Endothelial cell of umbilical vein (primary cell): ENCODE measurements at regions of chr6 and their contacts with region 1.

Region 1: DNA sequence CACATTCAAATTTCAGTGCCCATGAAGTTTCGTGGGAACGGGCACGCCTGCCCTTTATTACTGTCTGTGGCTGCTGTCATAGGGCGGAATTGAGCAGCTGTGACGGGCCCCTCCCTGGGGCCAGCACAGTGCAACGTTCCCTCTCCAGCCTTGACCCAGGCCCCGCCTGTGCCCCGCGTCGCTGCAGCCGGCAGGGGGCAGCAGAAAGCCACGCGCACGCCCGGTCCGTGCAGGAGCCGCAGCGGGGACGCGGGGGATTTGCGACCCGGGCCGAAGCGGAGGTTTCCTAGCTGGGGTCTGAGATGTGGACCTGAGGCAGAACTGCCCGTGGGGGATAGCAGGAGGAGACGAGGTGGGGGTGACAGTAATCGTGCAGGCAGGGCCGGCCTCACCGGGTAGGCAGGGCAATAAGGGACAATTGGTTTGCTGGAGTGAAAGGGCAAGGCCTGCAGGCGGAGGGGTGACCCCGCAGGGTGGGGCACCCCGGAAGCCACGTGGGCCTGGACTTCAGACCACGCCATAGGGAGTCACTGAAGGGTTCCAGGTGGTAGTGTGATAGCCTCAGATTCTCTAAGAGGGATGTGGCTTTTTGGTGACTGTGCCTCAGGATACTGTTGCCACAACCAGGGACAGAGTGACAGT is 54.4 kb downstream of the SYTL3 start:
- DNase-seq: peak; percentile 63
- H3K4me3 ChIP-seq: peak overlapping the region in 2 of 3 experiments; percentile 11 to 20
- H3K27ac ChIP-seq: no peak overlapping the region
- H3K4me1 ChIP-seq: peaks cover 23% of the 10 kb centered on the region
- H3K27me3 ChIP-seq: no peaks in the 10 kb centered on the region
- CTCF ChIP-seq: peak; percentile 98 to 99
- POLR2A ChIP-seq: no peak

Region 2: GRCh38 chr6:158213925-158214674 is 490.2 kb before region 1 on chr6:
- CTCF ChIA-PET with region 1: interaction called, 14 read pairs
- POLR2A ChIA-PET with region 1: no interaction called
- dilution Hi-C with region 1: no loop called
- intact Hi-C with region 1: no loop called
- DNase-seq: peak; percentile 80
- H3K4me3 ChIP-seq: no peak overlapping the region
- H3K27ac ChIP-seq: no peak overlapping the region
- H3K4me1 ChIP-seq: peaks cover 8% of the 10 kb centered on the region
- H3K27me3 ChIP-seq: no peaks in the 10 kb centered on the region
- CTCF ChIP-seq: peak; percentile 66 to 76
- POLR2A ChIP-seq: no peak

Region 3: DNA sequence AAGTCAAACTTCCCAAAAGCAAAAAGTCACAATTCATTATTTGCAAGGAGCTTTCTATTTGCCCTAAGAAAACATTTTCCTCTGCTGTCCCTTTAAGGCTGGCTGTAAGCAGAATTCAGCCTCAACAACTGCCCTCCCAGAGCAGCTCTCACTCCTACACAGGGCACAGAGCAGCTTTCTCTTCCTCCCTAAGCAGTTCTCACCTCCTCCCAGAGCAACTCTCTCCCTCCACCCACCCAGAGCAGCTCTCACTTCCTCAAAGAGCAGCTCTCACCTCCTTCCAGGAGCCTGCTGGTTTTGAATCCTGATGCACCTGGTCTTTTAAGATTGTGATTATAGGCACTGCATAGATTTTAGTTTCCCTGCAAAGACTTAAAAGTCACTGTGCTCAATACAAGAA is 265.0 kb before region 1 on chr6:
- CTCF ChIA-PET with region 1: no interaction called
- POLR2A ChIA-PET with region 1: no interaction called
- dilution Hi-C with region 1: no loop called
- intact Hi-C with region 1: no loop called
- DNase-seq: no peak
- H3K4me3 ChIP-seq: no peak overlapping the region
- H3K27ac ChIP-seq: no peak overlapping the region
- H3K4me1 ChIP-seq: no peaks in the 10 kb centered on the region
- H3K27me3 ChIP-seq: no peaks in the 10 kb centered on the region
- CTCF ChIP-seq: no peak
- POLR2A ChIP-seq: no peak

Region 4: GRCh38 chr6:158718461-158719046 is 14.3 kb after region 1 on chr6:
- CTCF ChIA-PET with region 1: interaction called, 51 read pairs
- POLR2A ChIA-PET with region 1: no interaction called
- dilution Hi-C with region 1: no loop called
- intact Hi-C with region 1: loop called (anchors 1 kb)
- DNase-seq: peak; percentile 44
- H3K4me3 ChIP-seq: no peak overlapping the region
- H3K27ac ChIP-seq: no peak overlapping the region
- H3K4me1 ChIP-seq: peaks cover 13% of the 10 kb centered on the region
- H3K27me3 ChIP-seq: no peaks in the 10 kb centered on the region
- CTCF ChIP-seq: peak; percentile 66 to 70
- POLR2A ChIP-seq: no peak

Region 5: DNA sequence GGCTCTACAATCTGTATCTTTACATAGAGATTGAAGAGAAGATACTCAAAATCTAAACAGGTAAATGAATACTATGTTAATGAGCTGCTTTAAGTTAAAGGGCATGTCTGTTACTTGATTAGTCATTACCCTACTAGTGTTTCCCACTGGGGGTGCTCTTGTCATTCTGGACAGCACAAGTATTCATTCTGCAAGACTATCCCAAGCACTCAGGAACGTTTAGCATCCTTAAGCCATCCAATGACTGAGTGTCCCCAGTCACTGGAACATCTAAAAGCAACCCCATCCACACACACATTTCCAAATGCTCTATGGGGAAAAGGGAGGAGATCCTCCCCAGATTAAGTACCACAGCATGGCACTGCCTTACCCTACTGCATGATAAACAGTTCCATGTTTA is 89.1 kb after region 1 on chr6:
- CTCF ChIA-PET with region 1: interaction called, 7 read pairs
- POLR2A ChIA-PET with region 1: no interaction called
- dilution Hi-C with region 1: no loop called
- intact Hi-C with region 1: loop called (anchors 10 kb)
- DNase-seq: peak; percentile 37
- H3K4me3 ChIP-seq: no peak overlapping the region
- H3K27ac ChIP-seq: no peak overlapping the region
- H3K4me1 ChIP-seq: no peaks in the 10 kb centered on the region
- H3K27me3 ChIP-seq: no peaks in the 10 kb centered on the region
- CTCF ChIP-seq: peak; percentile 7 to 33
- POLR2A ChIP-seq: no peak

Region 6: DNA sequence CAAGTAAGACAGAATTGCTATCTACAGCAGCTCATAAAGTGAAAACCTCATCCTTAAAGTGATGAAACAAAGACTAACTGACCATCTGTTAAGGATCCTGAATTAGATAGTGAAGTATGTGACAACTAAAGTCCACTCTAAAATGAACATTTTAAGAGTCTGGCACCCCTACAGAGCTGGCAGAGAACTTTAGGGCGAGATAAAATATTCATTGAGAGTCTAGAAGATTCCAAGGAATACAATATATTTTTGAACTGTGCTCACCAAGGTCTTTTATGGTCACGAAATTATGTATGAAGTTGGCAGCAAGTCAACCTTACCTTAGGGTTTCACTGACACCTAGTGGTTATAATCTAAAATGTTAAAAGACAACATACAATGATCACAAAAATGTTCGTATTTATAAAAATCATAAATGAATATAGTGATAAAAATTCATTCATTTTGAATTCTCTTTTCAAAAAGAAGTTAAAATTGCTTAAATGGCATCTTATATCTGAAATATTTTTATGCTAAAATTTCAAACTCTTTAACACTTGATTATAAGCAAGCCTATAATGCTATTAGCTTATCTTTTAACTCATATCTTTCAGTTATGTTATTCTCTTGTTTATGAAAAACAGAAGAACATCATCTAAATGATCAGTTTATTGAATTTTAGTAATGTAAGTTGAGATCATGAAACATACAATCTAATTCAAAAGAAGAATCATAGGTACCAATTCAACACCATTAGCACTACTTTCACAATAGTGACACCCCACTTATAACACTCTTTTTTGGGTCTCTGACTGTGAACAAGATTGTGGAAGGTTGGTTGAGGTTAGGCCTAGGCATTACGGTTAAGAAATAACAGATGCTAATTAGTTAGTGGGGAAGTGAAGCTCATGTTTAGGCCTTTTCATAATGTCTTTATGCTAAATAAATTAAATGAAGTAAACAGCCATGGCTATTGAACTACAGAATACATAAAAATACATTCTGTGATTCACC is 268.2 kb after region 1 on chr6:
- CTCF ChIA-PET with region 1: interaction called, 66 read pairs
- POLR2A ChIA-PET with region 1: no interaction called
- dilution Hi-C with region 1: no loop called
- intact Hi-C with region 1: loop called (anchors 1 kb)
- DNase-seq: peak; percentile 66
- H3K4me3 ChIP-seq: no peak overlapping the region
- H3K27ac ChIP-seq: no peak overlapping the region
- H3K4me1 ChIP-seq: no peaks in the 10 kb centered on the region
- H3K27me3 ChIP-seq: no peaks in the 10 kb centered on the region
- CTCF ChIP-seq: peak in 1 of 2 donors; percentile 14
- POLR2A ChIP-seq: no peak

Region 7: GRCh38 chr6:159134701-159135364 is 430.5 kb after region 1 on chr6:
- CTCF ChIA-PET with region 1: interaction called, 14 read pairs
- POLR2A ChIA-PET with region 1: no interaction called
- dilution Hi-C with region 1: no loop called
- intact Hi-C with region 1: no loop called
- DNase-seq: peak; percentile 62
- H3K4me3 ChIP-seq: no peak overlapping the region
- H3K27ac ChIP-seq: no peak overlapping the region
- H3K4me1 ChIP-seq: no peaks in the 10 kb centered on the region
- H3K27me3 ChIP-seq: peaks cover 0 to 2% of the 10 kb centered on the region in 2 experiments
- CTCF ChIP-seq: peak; percentile 80 to 86
- POLR2A ChIP-seq: no peak